Natural killer cell (primary cell): ENCODE measurements at regions of chrX and their contacts with region 1.

Region 1: GRCh38 chrX:53683556-53684414 is 2.7 kb downstream of the HUWE1 start:
- DNase-seq: peak; percentile 79 to 97
- ATAC-seq: peak; percentile 74 to 90 (median 79)
- H3K4me3 ChIP-seq: peak overlapping the region; percentile 80
- H3K4me3 Mint-ChIP-seq: peak overlapping the region; percentile 91
- H3K27ac ChIP-seq: peak overlapping the region; percentile 90
- H3K27ac Mint-ChIP-seq: peak overlapping the region; percentile 88 to 97
- H3K4me1 ChIP-seq: peaks cover 12% of the 10 kb centered on the region
- H3K4me1 Mint-ChIP-seq: peaks cover 32 to 39% of the 10 kb centered on the region in 2 donors
- H3K27me3 ChIP-seq: no peaks in the 10 kb centered on the region
- H3K27me3 Mint-ChIP-seq: no peaks in the 10 kb centered on the region
- CTCF ChIP-seq: no peak

Region 2: GRCh38 chrX:53081925-53082772 is 601.6 kb before region 1 on chrX and contains the start of gene TSPYL2:
- intact Hi-C with region 1: loop called (anchors 10 kb)
- DNase-seq: peak; percentile 89 to 96
- ATAC-seq: peak; percentile 77 to 93 (median 89)
- H3K4me3 ChIP-seq: peak within 1 kb of the TSS; percentile 81
- H3K4me3 Mint-ChIP-seq: peak within 1 kb of the TSS; percentile 95
- H3K27ac ChIP-seq: peak within 1 kb of the TSS; percentile 93
- H3K27ac Mint-ChIP-seq: peak within 1 kb of the TSS; percentile 94 to 95
- H3K4me1 ChIP-seq: peaks cover 19% of the 10 kb centered on the region
- H3K4me1 Mint-ChIP-seq: peaks cover 9 to 44% of the 10 kb centered on the region in 2 donors
- H3K27me3 ChIP-seq: no peaks in the 10 kb centered on the region
- H3K27me3 Mint-ChIP-seq: no peaks in the 10 kb centered on the region
- CTCF ChIP-seq: no peak
- total RNA-seq, gene TSPYL2: 103 to 318 (median 139) TPM

Region 3: GRCh38 chrX:53594354-53594753 is 89.4 kb before region 1 on chrX:
- intact Hi-C with region 1: no loop called
- DNase-seq: no peak
- ATAC-seq: no peak
- H3K4me3 ChIP-seq: no peak overlapping the region
- H3K4me3 Mint-ChIP-seq: no peak overlapping the region
- H3K27ac ChIP-seq: no peak overlapping the region
- H3K27ac Mint-ChIP-seq: no peak overlapping the region
- H3K4me1 ChIP-seq: no peaks in the 10 kb centered on the region
- H3K4me1 Mint-ChIP-seq: no peaks in the 10 kb centered on the region
- H3K27me3 ChIP-seq: no peaks in the 10 kb centered on the region
- H3K27me3 Mint-ChIP-seq: no peaks in the 10 kb centered on the region
- CTCF ChIP-seq: no peak

Region 4: DNA sequence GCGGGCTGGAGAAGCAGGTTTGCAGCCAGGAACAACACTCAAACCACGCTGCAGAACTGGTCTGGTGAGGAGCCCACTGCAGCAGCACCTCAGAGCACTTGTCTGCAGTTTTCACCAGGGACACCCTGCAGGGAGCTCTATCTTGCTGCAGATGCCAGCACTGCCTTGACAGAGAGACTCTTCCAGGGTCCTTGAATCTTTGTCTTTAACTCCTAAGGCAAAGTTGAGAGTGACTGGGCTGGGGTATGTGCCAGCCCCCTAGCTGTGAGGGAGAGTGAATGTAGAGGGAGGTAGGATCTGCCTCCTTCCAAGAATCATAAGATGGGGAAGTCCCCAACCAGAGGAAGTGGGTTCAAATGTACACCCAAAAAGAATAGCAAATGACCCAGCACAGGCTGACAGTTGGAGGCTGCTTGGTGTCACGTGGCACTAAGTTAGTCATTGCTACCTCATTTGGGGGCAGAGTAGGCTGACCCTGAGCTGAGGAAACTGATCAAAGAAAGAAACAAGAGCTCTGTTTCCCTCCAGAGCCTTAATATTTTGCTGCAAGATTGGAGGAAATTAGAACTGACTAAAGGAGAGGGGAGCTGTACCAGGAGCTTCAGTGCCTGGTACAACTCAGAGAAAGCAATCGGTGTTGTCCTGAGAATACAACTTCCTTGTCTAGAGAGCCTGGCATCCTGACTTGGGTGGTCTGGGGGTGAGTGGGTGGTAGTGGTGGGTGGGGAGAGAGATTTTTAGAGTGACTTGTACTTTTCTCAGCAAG is 31.0 kb after region 1 on chrX:
- intact Hi-C with region 1: loop called (anchors 1 kb)
- DNase-seq: peak; percentile 33 to 82
- ATAC-seq: peak; percentile 68 to 87 (median 83)
- H3K4me3 ChIP-seq: peak overlapping the region; percentile 28
- H3K4me3 Mint-ChIP-seq: peak overlapping the region; percentile 81
- H3K27ac ChIP-seq: peak overlapping the region; percentile 90
- H3K27ac Mint-ChIP-seq: peak overlapping the region; percentile 94 to 100
- H3K4me1 ChIP-seq: peaks cover 46% of the 10 kb centered on the region
- H3K4me1 Mint-ChIP-seq: peaks cover 37 to 44% of the 10 kb centered on the region in 2 donors
- H3K27me3 ChIP-seq: no peaks in the 10 kb centered on the region
- H3K27me3 Mint-ChIP-seq: no peaks in the 10 kb centered on the region
- CTCF ChIP-seq: no peak

Region 5: DNA sequence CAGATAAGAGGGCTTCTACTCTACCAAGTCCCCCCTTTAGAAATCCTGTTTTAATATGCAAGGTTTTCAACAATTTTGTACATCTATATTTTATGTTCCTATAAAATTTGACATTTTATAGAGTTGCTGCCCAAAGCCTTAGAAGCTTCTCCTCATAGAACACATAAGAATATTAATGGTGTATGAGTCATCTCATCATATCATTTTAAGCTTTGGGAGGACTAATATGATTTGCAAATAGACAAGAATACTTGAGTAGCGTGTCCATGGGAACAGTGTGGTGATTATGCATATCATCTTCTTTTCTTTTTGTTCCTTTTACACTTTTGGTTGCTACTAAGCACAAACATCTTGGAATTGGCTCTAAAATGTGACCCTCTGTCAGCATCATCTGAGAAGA is 59.5 kb after region 1 on chrX:
- intact Hi-C with region 1: loop called (anchors 2 kb)
- DNase-seq: no peak
- ATAC-seq: no peak
- H3K4me3 ChIP-seq: no peak overlapping the region
- H3K4me3 Mint-ChIP-seq: no peak overlapping the region
- H3K27ac ChIP-seq: no peak overlapping the region
- H3K27ac Mint-ChIP-seq: no peak overlapping the region
- H3K4me1 ChIP-seq: no peaks in the 10 kb centered on the region
- H3K4me1 Mint-ChIP-seq: no peaks in the 10 kb centered on the region
- H3K27me3 ChIP-seq: no peaks in the 10 kb centered on the region
- H3K27me3 Mint-ChIP-seq: no peaks in the 10 kb centered on the region
- CTCF ChIP-seq: no peak

Region 6: DNA sequence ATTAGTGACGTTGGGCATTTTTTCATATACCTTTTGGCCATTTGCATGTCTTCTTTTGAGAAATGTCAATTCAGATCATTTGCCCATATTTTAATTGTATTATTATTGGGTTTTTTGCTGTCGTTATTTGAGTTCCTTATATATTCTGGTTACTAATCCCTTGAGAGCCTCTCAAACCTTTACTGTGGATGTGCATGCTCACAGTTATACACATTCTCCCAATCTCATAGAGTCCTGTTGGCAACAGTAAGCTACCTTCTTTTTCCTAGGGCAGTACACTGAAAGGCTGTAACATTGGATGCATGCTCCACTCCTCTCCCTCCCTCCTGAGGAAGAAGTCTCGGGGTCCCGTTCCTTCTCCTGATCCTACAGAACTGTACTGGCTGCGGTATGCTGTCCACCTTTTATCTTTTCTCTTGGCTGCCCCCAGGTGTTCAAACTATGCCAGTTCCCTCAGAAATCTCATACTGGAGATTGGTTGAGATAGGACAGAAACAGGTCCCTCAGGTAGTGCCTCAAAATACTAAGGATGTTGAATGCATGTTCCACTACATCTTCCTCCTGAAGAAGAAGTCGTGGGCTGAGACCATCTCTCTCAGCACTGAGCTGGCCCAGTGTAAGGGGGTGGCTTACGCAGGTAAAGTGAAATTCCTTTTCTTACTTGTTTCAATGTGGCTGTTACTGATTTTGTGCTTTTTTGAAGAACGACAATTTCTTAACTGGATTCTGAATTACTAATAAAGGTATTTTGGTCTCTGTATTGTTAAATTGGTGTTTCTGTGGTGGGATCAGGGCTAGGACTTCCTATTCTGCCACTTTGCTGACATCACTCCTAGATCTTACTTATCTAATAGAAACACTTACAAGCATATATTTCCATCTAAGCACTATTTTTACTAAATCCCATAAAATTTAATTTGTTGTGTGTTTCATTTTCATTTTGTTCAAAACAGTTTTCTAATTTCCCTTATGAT is 148.2 kb after region 1 on chrX:
- intact Hi-C with region 1: loop called (anchors 2 kb)
- DNase-seq: peak in 1 of 2 donors; percentile 63
- ATAC-seq: peak; percentile 57 to 67 (median 62)
- H3K4me3 ChIP-seq: no peak overlapping the region
- H3K4me3 Mint-ChIP-seq: no peak overlapping the region
- H3K27ac ChIP-seq: no peak overlapping the region
- H3K27ac Mint-ChIP-seq: peak overlapping the region in 1 of 2 donors; percentile 7
- H3K4me1 ChIP-seq: no peaks in the 10 kb centered on the region
- H3K4me1 Mint-ChIP-seq: peaks cover 0 to 5% of the 10 kb centered on the region in 2 donors
- H3K27me3 ChIP-seq: no peaks in the 10 kb centered on the region
- H3K27me3 Mint-ChIP-seq: peaks cover 3 to 10% of the 10 kb centered on the region in 2 donors
- CTCF ChIP-seq: peak; percentile 21

Region 7: GRCh38 chrX:54044126-54044876 is 360.5 kb after region 1 on chrX and contains the start of gene PHF8:
- intact Hi-C with region 1: loop called (anchors 2 kb)
- DNase-seq: peak; percentile 93 to 95
- ATAC-seq: peak; percentile 81 to 94 (median 84)
- H3K4me3 ChIP-seq: peak within 1 kb of the TSS; percentile 83
- H3K4me3 Mint-ChIP-seq: peak within 1 kb of the TSS; percentile 95
- H3K27ac ChIP-seq: peak within 1 kb of the TSS; percentile 92
- H3K27ac Mint-ChIP-seq: peak within 1 kb of the TSS; percentile 91 to 94
- H3K4me1 ChIP-seq: peaks cover 18% of the 10 kb centered on the region
- H3K4me1 Mint-ChIP-seq: peaks cover 8 to 13% of the 10 kb centered on the region in 2 donors
- H3K27me3 ChIP-seq: no peaks in the 10 kb centered on the region
- H3K27me3 Mint-ChIP-seq: no peaks in the 10 kb centered on the region
- CTCF ChIP-seq: no peak
- total RNA-seq, gene PHF8: 55.4 to 74.1 (median 72.6) TPM

Region 8: DNA sequence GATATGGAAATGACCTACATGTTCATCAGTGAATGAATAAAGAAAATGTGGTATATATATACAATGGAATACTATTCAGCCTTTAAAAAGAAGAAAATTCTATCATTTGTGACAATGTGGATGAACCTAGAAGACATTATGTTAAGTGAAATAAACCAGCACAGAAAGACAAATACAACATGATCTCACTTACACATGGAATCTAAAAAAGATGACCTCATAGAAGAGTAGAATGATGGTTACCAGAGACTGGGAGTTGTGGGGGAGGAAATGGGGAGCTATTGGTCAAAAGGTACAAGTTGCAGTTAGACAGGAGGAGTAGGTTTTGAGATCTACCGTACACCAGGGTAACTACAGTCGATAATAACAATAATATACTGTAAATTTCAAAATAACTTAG is 622.6 kb after region 1 on chrX:
- intact Hi-C with region 1: no loop called
- DNase-seq: no peak
- ATAC-seq: no peak
- H3K4me3 ChIP-seq: no peak overlapping the region
- H3K4me3 Mint-ChIP-seq: no peak overlapping the region
- H3K27ac ChIP-seq: no peak overlapping the region
- H3K27ac Mint-ChIP-seq: no peak overlapping the region
- H3K4me1 ChIP-seq: no peaks in the 10 kb centered on the region
- H3K4me1 Mint-ChIP-seq: no peaks in the 10 kb centered on the region
- H3K27me3 ChIP-seq: no peaks in the 10 kb centered on the region
- H3K27me3 Mint-ChIP-seq: peaks cover 0 to 3% of the 10 kb centered on the region in 2 donors
- CTCF ChIP-seq: no peak

Region 9: GRCh38 chrX:54407266-54407665 is 723.5 kb after region 1 on chrX:
- intact Hi-C with region 1: no loop called
- DNase-seq: no peak
- ATAC-seq: no peak
- H3K4me3 ChIP-seq: no peak overlapping the region
- H3K4me3 Mint-ChIP-seq: no peak overlapping the region
- H3K27ac ChIP-seq: no peak overlapping the region
- H3K27ac Mint-ChIP-seq: no peak overlapping the region
- H3K4me1 ChIP-seq: peaks cover 11% of the 10 kb centered on the region
- H3K4me1 Mint-ChIP-seq: peaks cover 4 to 15% of the 10 kb centered on the region in 2 donors
- H3K27me3 ChIP-seq: peaks cover 13% of the 10 kb centered on the region
- H3K27me3 Mint-ChIP-seq: peaks cover 21 to 38% of the 10 kb centered on the region in 2 donors
- CTCF ChIP-seq: no peak

Region 10: DNA sequence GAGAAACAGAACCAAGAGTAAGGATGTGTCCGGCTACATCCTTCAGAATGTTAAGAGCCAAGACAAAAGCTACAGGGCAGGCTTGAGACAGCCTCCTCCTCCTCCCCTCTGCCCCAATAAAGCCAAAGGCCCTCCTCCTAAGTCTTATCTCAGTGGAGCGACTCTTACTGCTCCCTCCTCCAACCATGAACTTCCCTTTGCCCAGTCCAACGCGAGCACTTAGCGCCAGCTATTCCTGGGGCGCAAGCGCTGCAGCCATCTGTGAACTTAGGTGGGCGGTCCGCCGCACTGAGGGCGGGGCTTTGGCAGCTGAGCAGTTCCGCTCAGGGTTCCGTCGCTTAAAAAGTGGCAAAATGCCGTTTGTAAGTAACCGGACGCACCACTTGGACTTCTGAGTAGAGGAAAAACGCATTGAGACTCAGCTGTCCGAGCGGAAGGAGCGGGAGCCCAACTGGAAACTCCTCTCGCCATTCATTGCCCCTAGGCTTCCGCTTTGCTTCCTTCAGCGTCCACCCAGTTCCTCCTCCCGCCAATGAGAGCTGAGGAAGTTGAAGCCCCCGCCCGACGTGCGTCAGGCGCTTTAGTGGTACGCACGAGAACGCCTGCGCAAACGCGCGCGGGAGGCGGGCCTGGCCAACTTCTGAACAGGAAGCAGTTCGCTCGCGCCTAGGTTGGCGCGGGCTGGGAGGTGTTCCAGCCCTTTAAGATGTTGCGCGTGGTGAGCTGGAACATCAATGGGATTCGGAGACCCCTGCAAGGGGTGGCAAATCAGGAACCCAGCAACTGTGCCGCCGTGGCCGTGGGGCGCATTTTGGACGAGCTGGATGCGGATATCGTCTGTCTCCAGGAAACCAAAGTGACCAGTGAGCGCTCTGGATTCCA is 1316.2 kb after region 1 on chrX and contains the start of gene APEX2:
- intact Hi-C with region 1: loop called (anchors 5 kb)
- DNase-seq: peak; percentile 81 to 93
- ATAC-seq: peak; percentile 93 to 97 (median 94)
- H3K4me3 ChIP-seq: peak within 1 kb of the TSS; percentile 68
- H3K4me3 Mint-ChIP-seq: peak within 1 kb of the TSS; percentile 85
- H3K27ac ChIP-seq: peak within 1 kb of the TSS; percentile 94
- H3K27ac Mint-ChIP-seq: peak within 1 kb of the TSS; percentile 95 to 97
- H3K4me1 ChIP-seq: peaks cover 35% of the 10 kb centered on the region
- H3K4me1 Mint-ChIP-seq: peaks cover 15 to 25% of the 10 kb centered on the region in 2 donors
- H3K27me3 ChIP-seq: no peaks in the 10 kb centered on the region
- H3K27me3 Mint-ChIP-seq: peaks cover 0 to 5% of the 10 kb centered on the region in 2 donors
- CTCF ChIP-seq: no peak
- total RNA-seq, gene APEX2: 11.5 to 13.3 (median 12.4) TPM